ENCODE measurements at regions of chr5 and their contacts with region 1.

Region 1: GRCh38 chr5:97534166-97534565 is 351.1 kb upstream of the RIOK2 start:
- DNase-seq: no peak
- ATAC-seq: peak; percentile 82 to 84
- H3K4me3 ChIP-seq: no peak overlapping the region
- H3K27ac ChIP-seq: no peak overlapping the region
- H3K4me1 ChIP-seq: no peaks in the 10 kb centered on the region
- H3K27me3 ChIP-seq: no peaks in the 10 kb centered on the region

Region 2: GRCh38 chr5:97231025-97231636 is 303.0 kb before region 1 on chr5:
- intact Hi-C with region 1: loop called in 2 of 4 experiments (anchors 5 to 10 kb)
- DNase-seq: no peak
- ATAC-seq: peak; percentile 82 to 88
- H3K4me3 ChIP-seq: no peak overlapping the region
- H3K27ac ChIP-seq: no peak overlapping the region
- H3K4me1 ChIP-seq: no peaks in the 10 kb centered on the region
- H3K27me3 ChIP-seq: no peaks in the 10 kb centered on the region

Region 3: DNA sequence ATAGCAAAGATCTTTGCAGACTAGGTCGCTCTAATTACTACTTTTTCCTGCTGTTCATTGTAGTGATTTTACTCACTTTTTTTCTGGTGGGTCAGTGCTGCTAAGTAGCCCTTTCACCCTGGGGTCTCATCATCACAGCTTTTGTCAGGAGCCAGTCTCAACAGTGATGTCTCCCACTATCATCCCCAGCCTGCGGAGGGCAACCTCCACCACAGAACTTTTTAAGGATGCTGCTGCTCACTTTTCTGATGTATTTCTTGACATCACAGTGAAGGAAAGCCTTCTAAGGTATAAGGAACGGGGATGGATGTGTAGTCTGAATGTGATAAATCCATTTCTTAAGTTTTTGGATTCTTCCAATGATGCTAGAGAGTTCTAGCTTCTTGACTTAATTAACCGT is 108.7 kb before region 1 on chr5:
- intact Hi-C with region 1: loop called in 1 of 4 experiments (anchors 5 kb)
- DNase-seq: peak in 2 of 3 donors; percentile 21 to 38
- ATAC-seq: no peak
- H3K4me3 ChIP-seq: no peak overlapping the region
- H3K27ac ChIP-seq: no peak overlapping the region
- H3K4me1 ChIP-seq: no peaks in the 10 kb centered on the region
- H3K27me3 ChIP-seq: no peaks in the 10 kb centered on the region

Region 4: GRCh38 chr5:97436405-97436804 is 97.8 kb before region 1 on chr5:
- intact Hi-C with region 1: loop called in 1 of 4 experiments (anchors 5 kb)
- DNase-seq: no peak
- ATAC-seq: no peak
- H3K4me3 ChIP-seq: no peak overlapping the region
- H3K27ac ChIP-seq: no peak overlapping the region
- H3K4me1 ChIP-seq: no peaks in the 10 kb centered on the region
- H3K27me3 ChIP-seq: no peaks in the 10 kb centered on the region

Region 5: GRCh38 chr5:98205691-98206461 is 671.7 kb after region 1 on chr5:
- intact Hi-C with region 1: no loop called
- DNase-seq: no peak
- ATAC-seq: no peak
- H3K4me3 ChIP-seq: no peak overlapping the region
- H3K27ac ChIP-seq: no peak overlapping the region
- H3K4me1 ChIP-seq: no peaks in the 10 kb centered on the region
- H3K27me3 ChIP-seq: no peaks in the 10 kb centered on the region